ENCODE measurements at regions of chr18 and their contacts with region 1.

Region 1: GRCh38 chr18:2948038-2948437 is 64.9 kb downstream of the LPIN2 start:
- DNase-seq: no peak
- ATAC-seq: no peak
- H3K4me3 ChIP-seq: no peak overlapping the region
- H3K27ac ChIP-seq: no peak overlapping the region
- H3K4me1 ChIP-seq: no peaks in the 10 kb centered on the region
- H3K27me3 ChIP-seq: no peaks in the 10 kb centered on the region
- CTCF ChIP-seq: no peak; a peak in 1 of 6 replicates
- EP300 ChIP-seq: no peak
- POLR2A ChIP-seq: no peak
- RAD21 ChIP-seq: no peak

Region 2: DNA sequence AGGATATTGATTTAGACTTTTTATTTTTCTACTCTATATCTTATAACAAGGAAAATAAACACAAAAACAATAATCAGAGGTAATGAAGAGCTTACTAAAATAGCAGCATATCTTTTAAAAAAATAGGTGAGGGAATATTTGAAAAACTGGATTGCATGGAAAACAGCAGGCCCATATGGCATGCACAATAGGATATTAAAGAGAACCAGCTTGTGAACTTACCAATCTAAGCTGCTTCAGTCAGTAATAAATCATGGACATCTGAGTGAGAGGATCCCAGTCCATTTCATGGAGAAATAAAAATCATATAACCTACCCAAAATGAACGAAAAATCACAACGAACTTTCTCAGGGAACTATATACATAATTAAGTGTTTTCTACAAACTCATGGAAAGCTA is 1408.8 kb before region 1 on chr18:
- CTCF ChIA-PET with region 1: no interaction called
- POLR2A ChIA-PET with region 1: no interaction called
- RAD21 ChIA-PET with region 1: no interaction called
- SMC1A ChIA-PET with region 1: no interaction called
- in situ Hi-C with region 1: no loop called
- intact Hi-C with region 1: no loop called
- DNase-seq: no peak
- ATAC-seq: no peak
- H3K4me3 ChIP-seq: no peak overlapping the region
- H3K27ac ChIP-seq: no peak overlapping the region
- H3K4me1 ChIP-seq: no peaks in the 10 kb centered on the region
- H3K27me3 ChIP-seq: no peaks in the 10 kb centered on the region
- CTCF ChIP-seq: no peak
- EP300 ChIP-seq: no peak
- POLR2A ChIP-seq: no peak
- RAD21 ChIP-seq: no peak

Region 3: DNA sequence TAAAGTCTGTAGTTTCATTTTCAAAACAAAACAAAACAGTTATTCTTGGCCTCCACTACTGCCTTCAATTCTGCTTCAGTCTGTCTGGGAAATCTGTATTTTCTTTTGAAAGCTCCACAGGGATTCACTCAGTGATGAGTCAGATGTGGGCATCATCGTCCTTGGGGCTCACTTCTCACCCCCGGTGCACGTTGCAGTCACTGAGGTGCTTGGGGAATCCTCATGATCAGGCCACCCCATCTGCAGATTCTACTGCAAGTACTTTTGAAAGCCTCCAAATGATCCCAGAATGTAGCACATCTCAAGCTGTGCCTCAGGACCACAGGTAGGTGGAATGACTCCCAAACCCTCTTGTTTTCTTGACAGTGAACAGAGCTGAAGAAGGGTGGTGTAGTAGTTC is 30.6 kb after region 1 on chr18:
- CTCF ChIA-PET with region 1: interaction called, 12 read pairs
- POLR2A ChIA-PET with region 1: interaction called, 4 read pairs
- RAD21 ChIA-PET with region 1: interaction called, 5 read pairs
- SMC1A ChIA-PET with region 1: interaction called, 9 read pairs
- in situ Hi-C with region 1: no loop called
- intact Hi-C with region 1: no loop called
- DNase-seq: no peak
- ATAC-seq: peak; percentile 16
- H3K4me3 ChIP-seq: peak overlapping the region; percentile 41; the same call in 1 of the 2 replicates
- H3K27ac ChIP-seq: peak overlapping the region; percentile 70
- H3K4me1 ChIP-seq: peaks cover 41% of the 10 kb centered on the region
- H3K27me3 ChIP-seq: no peaks in the 10 kb centered on the region
- CTCF ChIP-seq: no peak
- EP300 ChIP-seq: no peak
- POLR2A ChIP-seq: no peak
- RAD21 ChIP-seq: no peak

Region 4: GRCh38 chr18:3384664-3385189 is 436.7 kb after region 1 on chr18:
- CTCF ChIA-PET with region 1: no interaction called
- POLR2A ChIA-PET with region 1: no interaction called
- RAD21 ChIA-PET with region 1: no interaction called
- SMC1A ChIA-PET with region 1: no interaction called
- in situ Hi-C with region 1: no loop called
- intact Hi-C with region 1: no loop called
- DNase-seq: peak; percentile 21
- ATAC-seq: peak; percentile 93
- H3K4me3 ChIP-seq: no peak overlapping the region
- H3K27ac ChIP-seq: peak overlapping the region; percentile 56
- H3K4me1 ChIP-seq: peaks cover 15% of the 10 kb centered on the region
- H3K27me3 ChIP-seq: peaks cover 0 to 2% of the 10 kb centered on the region in 2 experiments; a peak in 1 of 4 replicates
- CTCF ChIP-seq: no peak
- EP300 ChIP-seq: no peak
- POLR2A ChIP-seq: no peak
- RAD21 ChIP-seq: no peak